ENCODE measurements at regions of chr6 and their contacts with region 1.

Region 1: DNA sequence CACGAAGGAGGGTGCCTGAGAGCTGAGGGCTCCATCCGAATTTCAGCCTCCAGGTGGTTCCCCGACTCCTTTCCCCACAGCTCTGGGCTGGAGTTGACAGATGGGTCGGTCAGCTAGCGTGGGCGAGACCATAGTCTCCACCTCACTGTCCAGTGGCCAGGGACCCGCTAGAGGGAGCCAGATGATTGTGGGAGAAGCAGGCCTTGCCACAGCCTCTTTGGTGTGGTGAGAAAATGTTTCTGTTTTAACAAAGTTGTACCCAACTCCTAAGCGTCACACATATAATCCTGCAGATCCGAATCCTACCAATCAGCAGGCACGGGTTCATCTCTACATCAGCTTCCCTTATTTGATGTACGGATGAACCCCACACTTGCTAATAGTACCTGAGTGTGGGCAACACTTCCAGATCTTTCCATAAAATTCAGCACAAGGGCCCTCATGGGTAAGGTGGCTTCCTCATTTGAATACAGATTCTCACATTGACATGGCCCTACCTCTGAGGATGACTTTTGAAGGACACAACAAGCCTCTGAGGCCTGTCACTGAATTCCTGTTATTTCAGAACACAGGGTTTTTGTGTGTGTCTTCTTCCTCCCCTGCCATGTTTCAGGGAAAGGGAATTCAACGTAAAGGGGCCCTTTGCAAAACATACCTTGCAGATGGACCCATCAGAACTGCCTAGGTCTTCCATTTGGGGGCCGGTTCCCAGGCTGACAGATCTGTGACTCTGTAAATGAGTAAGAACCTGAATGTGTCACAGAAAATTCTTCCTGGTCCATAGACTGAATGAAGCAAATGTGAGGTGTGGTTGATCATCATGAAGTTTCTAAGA is 103.2 kb upstream of the DUSP22 start:
- DNase-seq: peak; percentile 70 to 74 (median 71)
- H3K4me3 ChIP-seq: no peak overlapping the region
- H3K4me3 Mint-ChIP-seq: peak overlapping the region in 2 of 8 donors; percentile 22 to 26
- H3K27ac ChIP-seq: no peak overlapping the region
- H3K27ac Mint-ChIP-seq: peak overlapping the region in 3 of 7 donors; percentile 35 to 43 (median 36)
- H3K4me1 ChIP-seq: peaks cover 19% of the 10 kb centered on the region
- H3K4me1 Mint-ChIP-seq: peaks cover 23 to 37% (median 31%) of the 10 kb centered on the region in 4 donors
- H3K27me3 ChIP-seq: no peaks in the 10 kb centered on the region
- H3K27me3 Mint-ChIP-seq: no peaks in the 10 kb centered on the region

Region 2: GRCh38 chr6:217048-217659 is 28.1 kb after region 1 on chr6:
- CTCF ChIA-PET with region 1: interaction called, 16 read pairs
- POLR2A ChIA-PET with region 1: interaction called, 17 read pairs
- intact Hi-C with region 1: no loop called
- DNase-seq: peak in 1 of 5 donors; percentile 13
- H3K4me3 ChIP-seq: no peak overlapping the region
- H3K4me3 Mint-ChIP-seq: no peak overlapping the region
- H3K27ac ChIP-seq: no peak overlapping the region
- H3K27ac Mint-ChIP-seq: peak overlapping the region in 2 of 7 donors; percentile 3 to 44
- H3K4me1 ChIP-seq: peaks cover 20% of the 10 kb centered on the region
- H3K4me1 Mint-ChIP-seq: peaks cover 14 to 50% (median 30%) of the 10 kb centered on the region in 4 donors
- H3K27me3 ChIP-seq: no peaks in the 10 kb centered on the region
- H3K27me3 Mint-ChIP-seq: no peaks in the 10 kb centered on the region

Region 3: GRCh38 chr6:399785-400534 is 210.9 kb after region 1 on chr6:
- CTCF ChIA-PET with region 1: interaction called, 6 read pairs
- POLR2A ChIA-PET with region 1: interaction called, 5 read pairs
- intact Hi-C with region 1: loop called (anchors 1 kb)
- DNase-seq: peak; percentile 22 to 67 (median 29)
- H3K4me3 ChIP-seq: no peak overlapping the region
- H3K4me3 Mint-ChIP-seq: peak overlapping the region in 7 of 8 donors; percentile 17 to 55 (median 47)
- H3K27ac ChIP-seq: no peak overlapping the region
- H3K27ac Mint-ChIP-seq: peak overlapping the region; percentile 8 to 79 (median 55)
- H3K4me1 ChIP-seq: peaks cover 40% of the 10 kb centered on the region
- H3K4me1 Mint-ChIP-seq: peaks cover 26 to 49% (median 43%) of the 10 kb centered on the region in 4 donors
- H3K27me3 ChIP-seq: no peaks in the 10 kb centered on the region
- H3K27me3 Mint-ChIP-seq: peaks cover 0 to 1% of the 10 kb centered on the region in 2 donors

Region 4: GRCh38 chr6:446418-447366 is 257.7 kb after region 1 on chr6:
- CTCF ChIA-PET with region 1: interaction called, 3 read pairs
- POLR2A ChIA-PET with region 1: no interaction called
- intact Hi-C with region 1: loop called (anchors 5 kb)
- DNase-seq: peak; percentile 67 to 96 (median 76)
- H3K4me3 ChIP-seq: peak overlapping the region; percentile 28 to 60
- H3K4me3 Mint-ChIP-seq: peak overlapping the region; percentile 78 to 92 (median 82)
- H3K27ac ChIP-seq: peak overlapping the region; percentile 54
- H3K27ac Mint-ChIP-seq: peak overlapping the region; percentile 81 to 95 (median 88)
- H3K4me1 ChIP-seq: peaks cover 53% of the 10 kb centered on the region
- H3K4me1 Mint-ChIP-seq: peaks cover 33 to 54% (median 48%) of the 10 kb centered on the region in 4 donors
- H3K27me3 ChIP-seq: no peaks in the 10 kb centered on the region
- H3K27me3 Mint-ChIP-seq: peaks cover 0 to 2% of the 10 kb centered on the region in 2 donors

Region 5: GRCh38 chr6:524803-525202 is 335.8 kb after region 1 on chr6:
- CTCF ChIA-PET with region 1: interaction called, 7 read pairs
- POLR2A ChIA-PET with region 1: no interaction called
- intact Hi-C with region 1: loop called (anchors 1 kb)
- DNase-seq: no peak
- H3K4me3 ChIP-seq: no peak overlapping the region
- H3K4me3 Mint-ChIP-seq: no peak overlapping the region
- H3K27ac ChIP-seq: no peak overlapping the region
- H3K27ac Mint-ChIP-seq: peak overlapping the region in 6 of 7 donors; percentile 44 to 90 (median 69)
- H3K4me1 ChIP-seq: peaks cover 6% of the 10 kb centered on the region
- H3K4me1 Mint-ChIP-seq: peaks cover 6 to 12% (median 10%) of the 10 kb centered on the region in 4 donors
- H3K27me3 ChIP-seq: no peaks in the 10 kb centered on the region
- H3K27me3 Mint-ChIP-seq: no peaks in the 10 kb centered on the region

Region 6: DNA sequence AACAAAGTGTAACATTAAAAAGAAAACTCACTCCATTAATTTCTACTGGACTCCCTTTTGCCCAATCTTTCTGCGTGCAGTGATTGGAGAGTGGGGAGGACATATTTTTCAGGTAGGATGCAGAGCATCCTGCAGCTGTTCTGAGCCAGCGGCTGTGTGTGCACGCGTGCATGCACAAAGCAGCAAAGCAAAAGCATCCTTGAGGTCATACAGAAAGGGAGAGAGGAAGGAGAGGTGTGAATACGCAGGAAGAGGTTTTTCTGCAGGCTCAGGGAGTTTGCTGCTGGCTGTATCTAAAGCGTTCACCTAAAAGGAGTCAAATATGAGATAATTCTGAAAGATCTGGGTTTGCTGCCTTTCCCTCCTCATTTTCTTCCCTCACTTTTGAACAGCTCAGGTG is 359.5 kb after region 1 on chr6:
- CTCF ChIA-PET with region 1: interaction called, 4 read pairs
- POLR2A ChIA-PET with region 1: no interaction called
- intact Hi-C with region 1: loop called (anchors 5 kb)
- DNase-seq: peak in 4 of 5 donors; percentile 2 to 20 (median 13)
- H3K4me3 ChIP-seq: no peak overlapping the region
- H3K4me3 Mint-ChIP-seq: peak overlapping the region in 5 of 8 donors; percentile 25 to 67 (median 37)
- H3K27ac ChIP-seq: no peak overlapping the region
- H3K27ac Mint-ChIP-seq: peak overlapping the region in 6 of 7 donors; percentile 6 to 76 (median 37)
- H3K4me1 ChIP-seq: peaks cover 15% of the 10 kb centered on the region
- H3K4me1 Mint-ChIP-seq: peaks cover 10 to 19% (median 16%) of the 10 kb centered on the region in 4 donors
- H3K27me3 ChIP-seq: no peaks in the 10 kb centered on the region
- H3K27me3 Mint-ChIP-seq: no peaks in the 10 kb centered on the region

Region 7: DNA sequence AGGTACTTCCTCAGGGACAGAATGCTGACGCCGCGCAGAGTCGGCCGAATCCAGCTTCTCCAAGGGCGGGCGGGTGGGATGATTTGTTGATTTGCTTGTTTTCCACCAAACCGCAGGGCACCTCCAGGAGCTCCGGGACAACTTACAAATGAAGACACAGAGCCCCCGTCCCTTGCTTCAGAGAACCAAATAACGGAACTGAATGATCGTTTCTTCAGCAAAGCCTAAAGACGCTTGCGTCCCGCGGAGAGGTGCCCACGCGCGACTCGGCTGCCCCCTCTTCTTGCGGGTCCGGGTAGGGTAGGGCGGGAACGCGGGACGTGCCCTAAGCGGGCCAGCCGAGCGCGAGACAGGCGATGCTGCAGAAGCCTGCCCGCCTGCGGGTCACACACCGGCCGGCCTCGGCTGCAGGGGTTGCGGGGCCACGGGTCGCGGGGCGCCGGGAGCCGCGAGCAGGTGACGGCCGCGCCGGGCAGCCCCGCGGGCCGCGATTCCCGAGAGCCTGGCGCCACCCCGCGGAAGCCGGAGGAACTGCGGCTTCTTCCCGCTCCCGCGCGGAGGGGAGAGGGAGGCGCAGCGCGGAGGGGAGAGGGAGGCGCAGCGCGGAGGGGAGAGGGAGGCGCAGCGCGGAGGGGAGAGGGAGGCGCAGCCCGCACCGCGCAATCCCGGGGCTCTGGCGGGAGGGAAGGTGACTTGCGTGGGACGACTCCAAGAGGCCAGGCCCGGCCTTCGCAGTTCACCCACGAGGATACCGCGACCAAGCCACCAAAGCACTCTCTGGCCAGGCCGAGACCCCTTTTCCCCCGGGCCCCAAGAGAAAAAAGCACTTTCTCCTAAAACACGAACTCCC is 1192.7 kb after region 1 on chr6:
- CTCF ChIA-PET with region 1: no interaction called
- POLR2A ChIA-PET with region 1: no interaction called
- intact Hi-C with region 1: loop called (anchors 5 kb)
- DNase-seq: peak in 4 of 5 donors; percentile 36 to 57 (median 48)
- H3K4me3 ChIP-seq: no peak overlapping the region
- H3K4me3 Mint-ChIP-seq: peak overlapping the region in 6 of 8 donors; percentile 21 to 74 (median 55)
- H3K27ac ChIP-seq: no peak overlapping the region
- H3K27ac Mint-ChIP-seq: no peak overlapping the region
- H3K4me1 ChIP-seq: peaks cover 38% of the 10 kb centered on the region
- H3K4me1 Mint-ChIP-seq: peaks cover 15 to 41% (median 33%) of the 10 kb centered on the region in 4 donors
- H3K27me3 ChIP-seq: peaks cover 41% of the 10 kb centered on the region
- H3K27me3 Mint-ChIP-seq: peaks cover 42 to 51% of the 10 kb centered on the region in 2 donors

Measured in CD4-positive, alpha-beta memory T cell (primary cell).